ENCODE measurements at regions of chr18 and their contacts with region 1.

Region 1: DNA sequence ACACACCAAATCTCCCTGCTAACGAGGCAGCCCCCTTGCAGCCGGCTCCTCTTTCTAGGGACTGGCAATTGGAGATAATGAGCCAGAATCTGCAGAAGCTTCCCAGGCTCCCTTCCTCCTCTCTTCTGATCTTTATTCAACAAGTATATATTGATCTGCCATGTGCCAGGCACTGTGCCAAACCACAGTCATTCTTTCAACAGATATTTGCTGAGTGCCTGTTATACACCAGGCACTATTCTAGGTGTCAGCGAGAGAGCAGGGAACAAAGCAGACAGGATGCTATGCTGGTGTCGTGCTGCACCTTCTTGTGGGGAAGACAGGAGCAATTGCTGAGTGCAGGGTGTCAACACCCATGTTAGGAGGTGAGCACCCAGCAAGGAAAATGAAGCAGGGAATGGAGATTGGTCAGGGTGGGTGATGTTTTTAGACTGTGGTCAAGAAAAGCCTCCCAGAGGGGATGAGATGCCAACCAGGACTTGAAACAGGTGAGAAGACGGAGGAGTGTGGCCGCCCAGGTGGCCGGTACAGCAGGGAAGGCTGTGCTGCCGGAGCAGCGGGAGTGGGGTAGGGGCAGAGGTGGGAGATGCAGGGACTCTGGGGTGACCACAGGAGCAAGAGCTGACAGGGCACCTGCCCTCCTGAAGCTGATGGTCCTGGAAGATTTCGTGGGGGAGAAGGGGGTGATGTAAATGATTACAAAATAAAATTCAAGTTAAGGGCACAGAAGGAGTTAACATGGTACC is 307.6 kb upstream of the RAB12 start:
- DNase-seq: no peak
- ATAC-seq: no peak
- H3K4me3 Mint-ChIP-seq: no peak overlapping the region
- H3K27ac Mint-ChIP-seq: no peak overlapping the region
- H3K4me1 Mint-ChIP-seq: no peaks in the 10 kb centered on the region
- H3K27me3 Mint-ChIP-seq: no peaks in the 10 kb centered on the region
- CTCF ChIP-seq: no peak

Region 2: GRCh38 chr18:8254654-8255053 is 46.9 kb before region 1 on chr18:
- CTCF ChIA-PET with region 1: no interaction called
- POLR2A ChIA-PET with region 1: no interaction called
- intact Hi-C with region 1: loop called (anchors 10 kb)
- DNase-seq: no peak
- ATAC-seq: no peak
- H3K4me3 Mint-ChIP-seq: no peak overlapping the region
- H3K27ac Mint-ChIP-seq: no peak overlapping the region
- H3K4me1 Mint-ChIP-seq: no peaks in the 10 kb centered on the region
- H3K27me3 Mint-ChIP-seq: no peaks in the 10 kb centered on the region
- CTCF ChIP-seq: no peak